ENCODE measurements at regions of chr15 and their contacts with region 1.

Region 1: DNA sequence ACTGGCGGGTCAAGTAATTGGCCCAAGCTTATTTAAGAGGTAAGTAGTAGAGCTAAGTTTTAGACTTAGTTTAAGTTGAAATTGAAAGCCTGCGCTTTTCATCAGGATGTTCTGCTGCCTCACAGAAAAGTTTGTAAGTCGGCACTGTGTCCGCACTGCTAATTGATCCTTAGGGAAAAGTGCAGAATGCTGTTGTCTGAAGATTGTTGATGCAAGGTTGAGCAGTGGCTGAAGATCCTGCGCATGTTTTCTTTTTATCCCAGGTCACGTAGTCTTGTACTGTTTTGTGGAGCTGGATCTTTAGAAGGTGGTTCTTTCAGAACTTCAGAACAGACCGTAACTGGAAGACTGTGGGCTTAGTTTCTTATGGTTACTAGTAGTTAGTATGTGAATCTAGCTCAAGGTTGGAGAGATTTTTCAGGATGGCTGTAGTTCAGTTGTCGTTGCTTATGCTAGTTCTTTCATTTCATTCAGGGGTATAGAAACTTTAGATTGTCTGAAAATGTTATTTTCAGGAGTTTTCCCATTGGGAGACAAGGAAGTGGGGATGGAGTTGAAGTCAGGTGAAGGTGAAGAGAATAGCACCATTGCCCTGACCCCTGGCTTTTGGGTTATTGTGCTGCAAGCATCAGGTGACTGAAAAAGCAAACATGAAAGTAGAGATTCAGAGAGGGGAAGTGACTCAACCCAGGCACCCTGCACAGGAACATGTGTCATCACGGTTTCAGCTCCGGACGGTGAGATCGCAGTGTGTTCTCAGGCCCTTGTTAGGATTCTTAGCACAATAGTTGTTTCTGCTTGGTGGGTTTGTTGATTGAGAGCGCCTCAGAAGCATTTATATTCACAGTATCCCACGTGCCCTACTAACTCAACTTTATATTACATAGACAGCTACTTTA is 32.8 kb downstream of the AKAP13 start:
- DNase-seq: peak; percentile 50
- ATAC-seq: peak; percentile 94
- H3K4me3 Mint-ChIP-seq: peak overlapping the region; percentile 48
- H3K27ac Mint-ChIP-seq: peak overlapping the region; percentile 87
- H3K4me1 Mint-ChIP-seq: peaks cover 73% of the 10 kb centered on the region
- H3K27me3 Mint-ChIP-seq: no peaks in the 10 kb centered on the region
- CTCF ChIP-seq: no peak

Region 2: DNA sequence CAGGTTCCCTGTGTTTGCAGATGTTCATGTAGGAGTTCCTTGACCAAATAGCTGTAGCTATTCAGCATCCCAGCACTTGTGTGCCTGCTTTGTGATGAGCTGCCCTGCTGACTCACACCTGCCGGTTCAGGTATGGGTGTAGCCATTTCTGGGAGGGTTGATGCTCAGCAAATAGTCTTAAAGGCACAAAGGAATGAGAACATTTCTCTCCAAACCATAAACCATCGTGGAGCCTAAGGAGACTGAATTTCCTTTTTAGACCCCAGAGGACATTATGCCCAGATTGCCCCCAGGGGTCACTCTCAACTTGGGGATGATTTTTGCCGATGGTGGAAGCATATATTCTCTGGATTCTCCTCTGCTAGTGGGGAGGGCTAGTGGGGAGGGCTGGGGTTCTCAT is 1678.7 kb before region 1 on chr15:
- CTCF ChIA-PET with region 1: no interaction called
- POLR2A ChIA-PET with region 1: no interaction called
- intact Hi-C with region 1: no loop called
- DNase-seq: no peak
- ATAC-seq: no peak
- H3K4me3 Mint-ChIP-seq: no peak overlapping the region
- H3K27ac Mint-ChIP-seq: no peak overlapping the region
- H3K4me1 Mint-ChIP-seq: no peaks in the 10 kb centered on the region
- H3K27me3 Mint-ChIP-seq: peaks cover 2% of the 10 kb centered on the region
- CTCF ChIP-seq: no peak

Region 3: DNA sequence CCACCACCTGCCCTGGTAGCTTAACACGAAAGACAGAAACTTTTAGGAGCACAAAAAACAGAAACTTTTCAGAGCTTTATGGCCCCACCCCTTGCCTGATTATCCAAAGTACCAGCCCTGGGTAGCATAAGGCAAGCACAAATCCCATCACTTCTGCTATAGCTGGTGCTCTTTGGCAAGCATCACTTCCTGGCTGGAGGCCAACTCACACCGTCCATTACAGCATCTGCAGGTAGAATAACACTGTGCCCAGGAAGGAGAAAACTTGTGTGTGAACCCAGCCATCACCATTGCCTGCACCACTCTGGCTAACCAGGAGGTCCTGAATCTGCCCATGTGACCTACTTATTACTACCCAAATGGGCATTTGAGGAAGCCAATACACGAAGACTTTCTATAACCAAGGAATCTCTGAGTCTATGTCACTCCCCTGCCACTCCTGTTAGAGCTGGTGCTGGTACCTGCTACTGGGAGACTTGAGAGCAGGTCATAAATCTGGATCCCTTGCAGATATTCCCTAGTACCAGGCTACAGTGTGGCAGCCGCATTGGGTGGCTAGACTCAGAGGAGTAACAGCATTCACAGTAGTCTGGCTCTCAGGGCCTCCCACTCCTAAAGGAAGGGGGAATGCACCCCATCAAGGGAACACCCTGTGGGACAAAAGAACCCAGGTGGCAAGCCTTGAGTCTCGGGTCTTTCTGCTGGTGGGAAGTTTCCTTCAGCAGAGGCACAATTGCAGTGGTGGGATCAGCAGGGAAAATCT is 106.1 kb before region 1 on chr15:
- CTCF ChIA-PET with region 1: interaction called, 30 read pairs
- POLR2A ChIA-PET with region 1: interaction called, 39 read pairs
- intact Hi-C with region 1: loop called (anchors 1 kb)
- DNase-seq: no peak
- ATAC-seq: no peak
- H3K4me3 Mint-ChIP-seq: no peak overlapping the region
- H3K27ac Mint-ChIP-seq: peak overlapping the region; percentile 61
- H3K4me1 Mint-ChIP-seq: peaks cover 68% of the 10 kb centered on the region
- H3K27me3 Mint-ChIP-seq: no peaks in the 10 kb centered on the region
- CTCF ChIP-seq: no peak

Region 4: DNA sequence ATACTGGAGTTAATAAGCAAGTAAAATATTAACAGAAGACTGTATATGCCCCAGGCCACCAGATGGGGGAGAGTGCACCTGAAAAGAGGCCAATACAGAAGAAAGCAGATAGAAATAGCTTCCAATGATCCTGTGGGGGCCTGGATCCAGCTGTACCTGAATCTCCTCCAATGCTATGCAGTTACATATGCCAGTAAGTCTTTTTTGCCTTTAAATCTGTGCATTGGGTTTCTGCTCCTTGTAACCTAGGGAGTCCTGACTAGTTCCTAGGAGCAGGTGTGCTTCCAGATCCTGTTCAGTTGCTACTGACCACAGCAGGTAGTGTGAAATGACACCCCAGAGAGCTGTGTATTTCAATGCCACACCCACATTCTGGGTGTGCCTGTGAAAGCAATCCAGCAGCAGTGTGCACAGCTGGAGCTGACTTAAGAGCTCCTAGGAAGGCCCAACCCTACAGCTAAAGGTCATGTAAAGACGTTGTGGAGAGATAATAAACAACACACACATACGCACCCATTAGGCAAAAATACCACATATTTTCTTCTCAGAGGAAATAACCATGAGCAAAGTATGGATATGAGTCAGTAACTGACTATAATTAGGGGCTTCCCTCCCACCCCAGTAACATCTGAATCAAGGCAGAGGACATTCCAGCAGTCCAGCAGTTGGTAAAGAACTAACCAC is 95.0 kb before region 1 on chr15:
- CTCF ChIA-PET with region 1: interaction called, 50 read pairs
- POLR2A ChIA-PET with region 1: interaction called, 39 read pairs
- intact Hi-C with region 1: loop called (anchors 1 kb)
- DNase-seq: no peak
- ATAC-seq: peak; percentile 87
- H3K4me3 Mint-ChIP-seq: peak overlapping the region; percentile 69
- H3K27ac Mint-ChIP-seq: peak overlapping the region; percentile 87
- H3K4me1 Mint-ChIP-seq: peaks cover 74% of the 10 kb centered on the region
- H3K27me3 Mint-ChIP-seq: no peaks in the 10 kb centered on the region
- CTCF ChIP-seq: no peak

Region 5: DNA sequence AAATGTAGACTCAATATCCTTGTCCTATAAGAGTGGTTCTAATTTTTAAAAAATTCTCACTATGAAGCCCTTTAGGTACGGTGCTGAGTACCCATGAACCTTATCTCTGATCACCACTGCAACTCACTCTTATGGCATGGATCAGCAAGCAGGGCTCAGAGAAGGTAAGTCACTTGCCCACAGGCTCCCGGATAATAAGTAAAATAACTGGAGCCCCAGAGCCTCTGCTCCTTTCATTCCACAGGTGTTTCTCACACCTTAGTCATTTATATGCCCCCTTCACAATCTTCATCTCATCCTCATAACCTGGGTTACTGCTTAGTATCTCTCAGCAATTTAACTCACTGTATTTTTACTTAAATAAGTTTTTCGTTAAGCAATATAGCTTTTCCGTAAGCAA is 61.2 kb before region 1 on chr15:
- CTCF ChIA-PET with region 1: no interaction called
- POLR2A ChIA-PET with region 1: no interaction called
- intact Hi-C with region 1: no loop called
- DNase-seq: no peak
- ATAC-seq: no peak
- H3K4me3 Mint-ChIP-seq: no peak overlapping the region
- H3K27ac Mint-ChIP-seq: no peak overlapping the region
- H3K4me1 Mint-ChIP-seq: no peaks in the 10 kb centered on the region
- H3K27me3 Mint-ChIP-seq: no peaks in the 10 kb centered on the region
- CTCF ChIP-seq: no peak

Region 6: GRCh38 chr15:85402195-85402881 is 10.9 kb before region 1 on chr15:
- CTCF ChIA-PET with region 1: interaction called, 31 read pairs
- POLR2A ChIA-PET with region 1: interaction called, 21 read pairs
- intact Hi-C with region 1: loop called (anchors 1 kb)
- DNase-seq: no peak
- ATAC-seq: no peak
- H3K4me3 Mint-ChIP-seq: peak overlapping the region; percentile 12
- H3K27ac Mint-ChIP-seq: peak overlapping the region; percentile 89
- H3K4me1 Mint-ChIP-seq: peaks cover 89% of the 10 kb centered on the region
- H3K27me3 Mint-ChIP-seq: no peaks in the 10 kb centered on the region
- CTCF ChIP-seq: no peak

Region 7: DNA sequence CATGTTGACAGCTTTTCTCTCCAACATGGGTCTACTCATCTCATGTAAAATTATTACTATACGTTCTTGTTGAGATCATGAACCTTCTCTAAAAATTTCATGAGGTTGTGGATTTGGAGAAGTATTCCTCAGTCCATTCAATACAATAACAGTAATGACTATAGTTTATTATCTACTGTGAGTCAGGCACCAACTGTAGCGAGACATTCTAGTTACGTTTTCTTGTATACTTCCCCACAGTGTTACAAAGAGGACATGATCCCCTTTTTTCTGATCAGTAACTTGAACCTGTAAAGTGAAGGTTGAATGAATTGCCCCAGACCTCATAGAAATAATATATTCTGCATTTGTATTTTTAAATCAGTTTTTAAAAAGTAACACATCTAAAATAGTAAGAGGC is 43.6 kb after region 1 on chr15:
- CTCF ChIA-PET with region 1: interaction called, 4 read pairs
- POLR2A ChIA-PET with region 1: interaction called, 10 read pairs
- intact Hi-C with region 1: loop called (anchors 1 kb)
- DNase-seq: no peak
- ATAC-seq: peak; percentile 69
- H3K4me3 Mint-ChIP-seq: no peak overlapping the region
- H3K27ac Mint-ChIP-seq: peak overlapping the region; percentile 88
- H3K4me1 Mint-ChIP-seq: peaks cover 90% of the 10 kb centered on the region
- H3K27me3 Mint-ChIP-seq: no peaks in the 10 kb centered on the region
- CTCF ChIP-seq: no peak

Region 8: GRCh38 chr15:85964471-85964870 is 551.3 kb after region 1 on chr15:
- CTCF ChIA-PET with region 1: no interaction called
- POLR2A ChIA-PET with region 1: no interaction called
- intact Hi-C with region 1: no loop called
- DNase-seq: no peak
- ATAC-seq: no peak
- H3K4me3 Mint-ChIP-seq: no peak overlapping the region
- H3K27ac Mint-ChIP-seq: no peak overlapping the region
- H3K4me1 Mint-ChIP-seq: no peaks in the 10 kb centered on the region
- H3K27me3 Mint-ChIP-seq: no peaks in the 10 kb centered on the region
- CTCF ChIP-seq: no peak